ENCODE measurements at regions of chr6 and their contacts with region 1.

Region 1: DNA sequence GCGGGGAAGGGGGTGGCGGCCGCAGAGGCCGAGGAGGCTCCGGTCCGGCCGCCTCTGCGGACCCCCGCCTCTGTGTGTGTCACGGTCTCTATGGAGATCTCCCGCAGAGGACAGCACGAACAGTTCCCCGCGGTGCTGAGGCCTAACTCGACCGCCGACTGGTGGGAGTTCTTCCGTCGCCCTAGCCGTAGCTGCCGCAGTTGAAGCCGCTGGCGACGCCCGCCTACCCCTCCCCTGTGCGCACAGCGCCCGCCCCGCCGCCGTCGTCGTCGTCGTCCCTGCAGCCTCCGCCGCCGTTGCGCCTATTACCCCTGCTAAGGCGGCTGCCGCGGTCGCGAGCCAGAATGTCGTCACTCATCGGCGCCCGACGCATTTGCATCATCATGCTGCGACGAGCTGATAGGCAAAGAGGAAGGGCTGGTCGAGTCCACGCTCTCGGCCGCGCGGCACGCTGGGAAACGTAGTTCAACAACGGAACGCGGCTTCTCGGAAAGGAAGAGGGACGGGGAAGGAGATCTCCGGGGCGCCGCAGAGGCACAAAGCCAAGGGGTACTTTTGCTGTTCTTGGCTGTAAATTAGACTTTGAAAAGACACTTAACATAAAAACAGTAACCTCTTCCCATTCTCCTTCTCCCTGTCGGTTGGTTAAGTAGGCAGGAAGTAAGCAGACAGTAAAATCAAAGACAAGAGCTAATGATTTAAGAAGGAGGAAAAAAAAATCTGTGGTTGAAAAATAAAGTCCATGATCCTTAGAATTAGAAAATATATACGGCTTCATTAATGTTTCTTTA is at the start of gene NUP153:
- DNase-seq: peak; percentile 100
- ATAC-seq: peak; percentile 67
- H3K4me3 ChIP-seq: peak within 1 kb of the TSS; percentile 71 to 98 (median 94)
- H3K4me3 Mint-ChIP-seq: peak within 1 kb of the TSS; percentile 96
- H3K27ac ChIP-seq: peak within 1 kb of the TSS; percentile 99
- H3K27ac Mint-ChIP-seq: peak within 1 kb of the TSS; percentile 100
- H3K4me1 ChIP-seq: peaks cover 39 to 45% of the 10 kb centered on the region in 2 donors
- H3K4me1 Mint-ChIP-seq: peaks cover 30% of the 10 kb centered on the region
- H3K27me3 ChIP-seq: no peaks in the 10 kb centered on the region
- H3K27me3 Mint-ChIP-seq: no peaks in the 10 kb centered on the region
- CTCF ChIP-seq: no peak
- total RNA-seq, gene NUP153: 70.5 and 74.6 TPM in 2 replicates

Region 2: GRCh38 chr6:17599885-17600526 is 106.8 kb before region 1 on chr6 and contains the start of gene FAM8A1:
- CTCF ChIA-PET with region 1: interaction called, 11 read pairs
- POLR2A ChIA-PET with region 1: interaction called, 10 read pairs
- intact Hi-C with region 1: loop called (anchors 1 kb)
- DNase-seq: peak; percentile 93
- ATAC-seq: peak; percentile 90
- H3K4me3 ChIP-seq: peak within 1 kb of the TSS; percentile 51 to 84 (median 79)
- H3K4me3 Mint-ChIP-seq: peak within 1 kb of the TSS; percentile 91
- H3K27ac ChIP-seq: peak within 1 kb of the TSS; percentile 54 to 74
- H3K27ac Mint-ChIP-seq: peak within 1 kb of the TSS; percentile 86
- H3K4me1 ChIP-seq: peaks cover 13% of the 10 kb centered on the region in 2 donors
- H3K4me1 Mint-ChIP-seq: peaks cover 10% of the 10 kb centered on the region
- H3K27me3 ChIP-seq: no peaks in the 10 kb centered on the region
- H3K27me3 Mint-ChIP-seq: no peaks in the 10 kb centered on the region
- CTCF ChIP-seq: peak; percentile 41
- total RNA-seq, gene FAM8A1: 5.2 and 7.0 TPM in 2 replicates

Region 3: GRCh38 chr6:17688481-17688880 is 18.3 kb before region 1 on chr6:
- CTCF ChIA-PET with region 1: interaction called, 35 read pairs
- POLR2A ChIA-PET with region 1: interaction called, 22 read pairs
- intact Hi-C with region 1: loop called (anchors 2 kb)
- DNase-seq: no peak
- ATAC-seq: no peak
- H3K4me3 ChIP-seq: no peak overlapping the region
- H3K4me3 Mint-ChIP-seq: no peak overlapping the region
- H3K27ac ChIP-seq: no peak overlapping the region
- H3K27ac Mint-ChIP-seq: no peak overlapping the region
- H3K4me1 ChIP-seq: peaks cover 15 to 17% of the 10 kb centered on the region in 2 donors
- H3K4me1 Mint-ChIP-seq: peaks cover 46% of the 10 kb centered on the region
- H3K27me3 ChIP-seq: no peaks in the 10 kb centered on the region
- H3K27me3 Mint-ChIP-seq: no peaks in the 10 kb centered on the region
- CTCF ChIP-seq: no peak

Region 4: DNA sequence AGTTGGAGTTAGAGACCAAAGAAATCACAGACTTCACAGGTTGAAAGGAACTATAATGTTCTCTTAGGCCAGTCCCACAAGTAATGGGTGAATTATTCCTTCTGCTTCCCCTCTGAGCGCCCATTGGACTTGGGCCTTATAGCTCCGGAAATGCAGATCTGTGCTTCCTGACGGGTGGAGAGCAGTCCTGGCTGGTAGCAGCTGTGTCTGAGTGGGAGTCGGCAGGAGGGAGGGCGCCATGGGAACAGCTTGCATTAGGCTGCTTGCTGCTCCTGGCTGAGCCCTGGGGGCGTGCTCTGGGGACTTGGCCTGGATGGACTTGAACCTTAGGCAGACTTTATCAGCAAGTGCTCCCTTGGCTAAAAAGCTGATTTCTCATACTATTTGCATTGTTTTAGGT is 18.3 kb after region 1 on chr6:
- CTCF ChIA-PET with region 1: no interaction called
- POLR2A ChIA-PET with region 1: no interaction called
- intact Hi-C with region 1: no loop called
- DNase-seq: no peak
- ATAC-seq: no peak
- H3K4me3 ChIP-seq: no peak overlapping the region
- H3K4me3 Mint-ChIP-seq: no peak overlapping the region
- H3K27ac ChIP-seq: no peak overlapping the region
- H3K27ac Mint-ChIP-seq: no peak overlapping the region
- H3K4me1 ChIP-seq: no peaks in the 10 kb centered on the region
- H3K4me1 Mint-ChIP-seq: no peaks in the 10 kb centered on the region
- H3K27me3 ChIP-seq: no peaks in the 10 kb centered on the region
- H3K27me3 Mint-ChIP-seq: peaks cover 14% of the 10 kb centered on the region
- CTCF ChIP-seq: no peak

Region 5: DNA sequence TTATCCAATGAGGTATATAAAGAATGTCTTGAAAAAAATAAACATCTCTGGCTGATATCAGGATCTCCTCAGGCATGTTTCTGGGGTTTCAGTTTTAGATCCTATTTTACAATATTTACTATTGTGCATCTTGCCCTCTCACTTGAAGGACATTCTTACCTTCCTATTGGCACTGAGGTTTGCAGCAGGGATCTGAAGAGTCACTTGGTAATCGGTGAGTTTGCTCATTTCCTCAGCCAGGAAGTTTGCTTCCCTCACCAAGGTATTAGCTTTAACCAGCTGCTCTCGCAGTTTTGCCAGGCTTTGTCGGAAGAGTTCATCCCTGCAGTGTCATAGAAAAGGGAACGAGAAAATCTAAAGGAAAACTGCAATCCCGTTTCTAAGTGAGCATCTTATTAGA is 101.8 kb after region 1 on chr6:
- CTCF ChIA-PET with region 1: interaction called, 21 read pairs
- POLR2A ChIA-PET with region 1: no interaction called
- intact Hi-C with region 1: loop called (anchors 2 kb)
- DNase-seq: no peak
- ATAC-seq: no peak
- H3K4me3 ChIP-seq: no peak overlapping the region
- H3K4me3 Mint-ChIP-seq: no peak overlapping the region
- H3K27ac ChIP-seq: no peak overlapping the region
- H3K27ac Mint-ChIP-seq: no peak overlapping the region
- H3K4me1 ChIP-seq: no peaks in the 10 kb centered on the region
- H3K4me1 Mint-ChIP-seq: no peaks in the 10 kb centered on the region
- H3K27me3 ChIP-seq: no peaks in the 10 kb centered on the region
- H3K27me3 Mint-ChIP-seq: no peaks in the 10 kb centered on the region
- CTCF ChIP-seq: no peak

Region 6: GRCh38 chr6:17987576-17988421 is 281.0 kb after region 1 on chr6 and contains the start of gene KIF13A:
- CTCF ChIA-PET with region 1: no interaction called
- POLR2A ChIA-PET with region 1: interaction called, 3 read pairs
- intact Hi-C with region 1: loop called (anchors 2 kb)
- DNase-seq: peak; percentile 81
- ATAC-seq: peak; percentile 74
- H3K4me3 ChIP-seq: peak within 1 kb of the TSS; percentile 41 to 85 (median 63)
- H3K4me3 Mint-ChIP-seq: peak within 1 kb of the TSS; percentile 97
- H3K27ac ChIP-seq: peak within 1 kb of the TSS in 1 of 2 donors; percentile 58
- H3K27ac Mint-ChIP-seq: peak within 1 kb of the TSS; percentile 92
- H3K4me1 ChIP-seq: peaks cover 19 to 23% of the 10 kb centered on the region in 2 donors
- H3K4me1 Mint-ChIP-seq: peaks cover 40% of the 10 kb centered on the region
- H3K27me3 ChIP-seq: peaks cover 0 to 13% (median 5%) of the 10 kb centered on the region in 4 experiments
- H3K27me3 Mint-ChIP-seq: no peaks in the 10 kb centered on the region
- CTCF ChIP-seq: peak; percentile 35
- total RNA-seq, gene KIF13A: 21.3 and 23.4 TPM in 2 replicates